SK-N-SH (cell line): ENCODE measurements at regions of chr18 and their contacts with region 1.

Region 1: GRCh38 chr18:55322178-55322735 is 265.7 kb downstream of the TCF4 start:
- DNase-seq: peak; percentile 77
- H3K4me3 ChIP-seq: peak overlapping the region; percentile 78 to 80
- H3K27ac ChIP-seq: peak overlapping the region; percentile 95 to 100
- H3K4me1 ChIP-seq: peaks cover 31 to 33% of the 10 kb centered on the region in 2 experiments
- H3K27me3 ChIP-seq: no peaks in the 10 kb centered on the region
- CTCF ChIP-seq: peak; percentile 37; the same call in 1 of the 2 replicates
- EP300 ChIP-seq: peak; percentile 28 to 98; a peak in 3 of 4 replicates
- RAD21 ChIP-seq: peak; percentile 44; the same call in 1 of the 2 replicates

Region 2: DNA sequence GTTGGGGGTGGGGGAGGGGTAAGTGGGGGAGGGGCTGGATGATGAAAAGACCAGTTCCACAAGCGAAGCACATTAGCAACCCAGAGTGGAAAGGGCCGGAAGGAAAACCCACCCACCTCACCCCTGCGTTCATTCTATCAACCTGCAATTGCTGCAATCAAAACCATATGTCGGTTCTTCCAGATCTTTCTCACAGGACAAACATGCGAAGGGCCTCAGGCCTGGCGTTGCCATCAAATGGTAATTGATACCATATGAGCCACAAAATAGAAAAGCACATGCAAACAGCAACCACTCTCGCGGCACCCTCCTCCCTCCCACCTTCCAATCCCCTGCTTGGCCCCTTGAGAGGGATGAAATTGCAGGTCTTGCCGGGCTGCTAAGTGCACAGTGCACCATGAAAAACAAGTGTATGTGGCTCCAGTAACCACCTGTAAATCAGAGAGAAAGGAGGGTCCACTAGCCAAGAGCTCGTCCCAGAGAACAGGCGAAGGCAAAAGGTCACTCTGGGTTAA is 21.8 kb before region 1 on chr18:
- CTCF ChIA-PET with region 1: interaction called, 16 read pairs
- POLR2A ChIA-PET with region 1: interaction called, 85 read pairs
- DNase-seq: peak; percentile 65
- H3K4me3 ChIP-seq: peak overlapping the region; percentile 46 to 66
- H3K27ac ChIP-seq: peak overlapping the region; percentile 92 to 100
- H3K4me1 ChIP-seq: peaks cover 14 to 67% of the 10 kb centered on the region in 2 experiments; a peak in 3 of 4 replicates
- H3K27me3 ChIP-seq: no peaks in the 10 kb centered on the region
- CTCF ChIP-seq: no peak
- EP300 ChIP-seq: peak; percentile 83 to 94
- RAD21 ChIP-seq: no peak; the same call in 1 of the 2 replicates

Region 3: DNA sequence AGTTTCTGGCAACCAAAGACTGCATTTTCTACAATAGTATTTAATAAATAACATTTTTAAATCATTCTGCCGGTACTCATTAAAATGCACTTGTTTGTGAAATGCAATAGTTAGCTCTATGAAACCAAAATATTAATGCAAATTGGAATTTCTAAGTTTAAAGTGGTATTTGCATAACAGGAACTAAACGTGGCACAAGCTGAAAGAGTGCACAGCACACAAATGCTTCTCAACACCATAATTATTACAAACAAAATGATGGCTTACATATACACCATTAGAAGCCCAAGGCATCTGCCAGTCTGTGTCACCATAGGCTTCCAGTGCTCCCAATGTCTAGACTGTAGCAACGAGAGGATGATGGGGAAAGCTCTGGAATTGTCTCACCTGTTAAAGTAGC is 14.8 kb before region 1 on chr18:
- CTCF ChIA-PET with region 1: interaction called, 16 read pairs
- POLR2A ChIA-PET with region 1: interaction called, 85 read pairs
- DNase-seq: no peak
- H3K4me3 ChIP-seq: no peak overlapping the region
- H3K27ac ChIP-seq: peak overlapping the region in 1 of 2 experiments; percentile 34; a peak in 2 of 4 replicates
- H3K4me1 ChIP-seq: peaks cover 18 to 63% of the 10 kb centered on the region in 2 experiments; a peak in 3 of 4 replicates
- H3K27me3 ChIP-seq: no peaks in the 10 kb centered on the region
- CTCF ChIP-seq: no peak
- EP300 ChIP-seq: no peak
- RAD21 ChIP-seq: no peak

Region 4: DNA sequence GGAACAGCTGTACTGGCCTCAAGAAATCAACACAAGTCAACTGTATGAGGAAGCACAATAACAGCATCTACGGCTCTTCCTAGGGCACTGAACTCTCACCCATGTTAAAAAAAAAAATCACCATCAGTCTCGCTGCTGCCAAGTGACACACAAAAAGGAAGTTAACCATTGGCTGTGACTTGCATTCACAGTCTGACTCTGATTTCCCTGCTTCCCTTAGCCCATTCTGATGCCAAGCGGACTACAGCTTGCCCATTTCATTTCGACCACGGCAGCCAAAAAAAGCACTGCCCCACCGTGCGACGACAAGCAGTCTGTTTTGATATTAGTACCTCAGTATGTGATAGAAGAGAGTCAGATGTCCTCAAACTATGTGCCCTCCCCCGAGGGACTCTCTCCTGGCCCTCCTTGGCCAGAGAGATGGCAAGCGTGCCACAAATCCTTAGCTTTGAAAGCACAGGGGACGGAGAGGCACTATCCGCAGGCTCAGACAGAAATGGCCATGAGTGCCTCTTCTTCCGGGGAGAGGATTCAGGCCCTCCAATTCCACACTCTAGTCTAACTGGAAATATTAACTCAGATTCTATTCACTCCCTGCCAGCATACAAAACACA is 15.8 kb after region 1 on chr18:
- CTCF ChIA-PET with region 1: interaction called, 16 read pairs
- POLR2A ChIA-PET with region 1: interaction called, 12 read pairs
- DNase-seq: no peak
- H3K4me3 ChIP-seq: peak overlapping the region; percentile 21 to 53
- H3K27ac ChIP-seq: peak overlapping the region; percentile 82 to 98
- H3K4me1 ChIP-seq: peaks cover 47 to 55% of the 10 kb centered on the region in 2 experiments
- H3K27me3 ChIP-seq: no peaks in the 10 kb centered on the region
- CTCF ChIP-seq: no peak
- EP300 ChIP-seq: no peak
- RAD21 ChIP-seq: no peak

Region 5: DNA sequence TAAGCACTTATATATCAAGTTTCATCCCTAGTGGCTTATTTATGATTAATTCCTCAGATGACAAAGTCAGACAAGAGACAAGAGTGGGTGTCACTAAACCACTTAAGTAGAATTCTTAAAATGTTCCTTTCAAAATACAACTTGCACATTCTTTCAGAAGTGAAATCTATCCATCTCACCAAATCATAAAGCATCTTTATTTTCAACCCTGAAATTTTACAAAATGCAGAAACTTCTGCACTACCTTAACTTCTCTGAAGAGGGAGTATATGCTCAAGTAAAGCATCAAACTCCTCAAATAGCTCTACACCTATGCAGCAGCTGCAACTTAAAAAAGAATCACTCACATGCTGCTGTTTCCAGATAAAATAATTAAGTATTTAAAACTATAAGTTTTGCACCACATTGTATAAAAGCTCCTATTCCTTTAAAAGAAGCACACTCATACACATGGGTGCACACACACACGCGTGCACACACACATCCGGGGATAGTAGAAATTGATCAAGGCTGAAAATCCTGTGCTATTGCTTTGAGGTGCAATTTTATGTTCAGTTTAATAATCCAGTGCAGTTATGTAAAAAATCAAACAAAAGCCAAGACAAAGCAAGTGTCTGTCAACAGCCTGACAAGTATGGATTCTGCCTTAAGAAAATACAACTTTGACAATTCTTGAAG is 21.3 kb after region 1 on chr18:
- CTCF ChIA-PET with region 1: interaction called, 16 read pairs
- POLR2A ChIA-PET with region 1: interaction called, 12 read pairs
- DNase-seq: no peak
- H3K4me3 ChIP-seq: no peak overlapping the region
- H3K27ac ChIP-seq: peak overlapping the region; percentile 15 to 43; a peak in 3 of 4 replicates
- H3K4me1 ChIP-seq: peaks cover 30 to 43% of the 10 kb centered on the region in 2 experiments
- H3K27me3 ChIP-seq: no peaks in the 10 kb centered on the region
- CTCF ChIP-seq: peak; percentile 79
- EP300 ChIP-seq: no peak
- RAD21 ChIP-seq: peak; percentile 86

Region 6: GRCh38 chr18:55458456-55459203 is 136.4 kb after region 1 on chr18:
- CTCF ChIA-PET with region 1: no interaction called
- POLR2A ChIA-PET with region 1: no interaction called
- DNase-seq: no peak
- H3K4me3 ChIP-seq: no peak overlapping the region
- H3K27ac ChIP-seq: peak overlapping the region in 1 of 2 experiments; percentile 60; a peak in 2 of 4 replicates
- H3K4me1 ChIP-seq: peaks cover 3 to 20% of the 10 kb centered on the region in 2 experiments; a peak in 2 of 4 replicates
- H3K27me3 ChIP-seq: no peaks in the 10 kb centered on the region
- CTCF ChIP-seq: no peak
- EP300 ChIP-seq: no peak
- RAD21 ChIP-seq: no peak

Region 7: GRCh38 chr18:55753643-55754263 is 431.5 kb after region 1 on chr18:
- CTCF ChIA-PET with region 1: no interaction called
- POLR2A ChIA-PET with region 1: no interaction called
- DNase-seq: no peak
- H3K4me3 ChIP-seq: no peak overlapping the region
- H3K27ac ChIP-seq: no peak overlapping the region
- H3K4me1 ChIP-seq: peaks cover 0 to 12% of the 10 kb centered on the region in 2 experiments; a peak in 2 of 4 replicates
- H3K27me3 ChIP-seq: no peaks in the 10 kb centered on the region
- CTCF ChIP-seq: no peak
- EP300 ChIP-seq: no peak
- RAD21 ChIP-seq: no peak

Region 8: DNA sequence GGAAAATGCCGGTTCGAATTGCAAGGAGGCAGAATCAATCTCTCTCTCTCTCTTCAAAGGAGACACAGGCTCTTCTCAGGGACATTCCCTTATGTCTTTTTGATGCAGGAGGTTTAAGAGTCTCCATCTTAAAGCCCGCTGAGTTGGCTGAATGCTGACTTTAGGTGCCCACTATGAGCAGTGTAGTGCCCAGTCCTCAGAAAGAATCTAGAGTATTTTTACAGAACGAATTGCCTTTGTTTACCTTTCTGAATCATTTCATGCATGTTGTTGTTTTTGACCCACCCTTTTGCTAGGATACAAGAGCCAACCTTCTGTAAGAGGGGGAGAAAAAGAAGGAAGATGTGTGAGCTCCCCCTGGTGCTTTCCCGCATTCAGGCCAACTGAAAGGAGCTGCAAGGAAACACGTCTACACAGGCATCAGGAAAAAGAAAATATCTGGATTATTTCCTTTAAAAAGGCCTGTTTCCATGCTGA is 459.3 kb after region 1 on chr18:
- CTCF ChIA-PET with region 1: interaction called, 7 read pairs
- POLR2A ChIA-PET with region 1: interaction called, 12 read pairs
- DNase-seq: peak; percentile 74
- H3K4me3 ChIP-seq: no peak overlapping the region; a peak in 1 of 4 replicates
- H3K27ac ChIP-seq: peak overlapping the region in 1 of 2 experiments; percentile 50; a peak in 2 of 4 replicates
- H3K4me1 ChIP-seq: peaks cover 0 to 10% of the 10 kb centered on the region in 2 experiments; a peak in 3 of 4 replicates
- H3K27me3 ChIP-seq: no peaks in the 10 kb centered on the region
- CTCF ChIP-seq: peak; percentile 79
- EP300 ChIP-seq: no peak
- RAD21 ChIP-seq: peak; percentile 92